ENCODE measurements at regions of chr4 and their contacts with region 1.

Region 1: DNA sequence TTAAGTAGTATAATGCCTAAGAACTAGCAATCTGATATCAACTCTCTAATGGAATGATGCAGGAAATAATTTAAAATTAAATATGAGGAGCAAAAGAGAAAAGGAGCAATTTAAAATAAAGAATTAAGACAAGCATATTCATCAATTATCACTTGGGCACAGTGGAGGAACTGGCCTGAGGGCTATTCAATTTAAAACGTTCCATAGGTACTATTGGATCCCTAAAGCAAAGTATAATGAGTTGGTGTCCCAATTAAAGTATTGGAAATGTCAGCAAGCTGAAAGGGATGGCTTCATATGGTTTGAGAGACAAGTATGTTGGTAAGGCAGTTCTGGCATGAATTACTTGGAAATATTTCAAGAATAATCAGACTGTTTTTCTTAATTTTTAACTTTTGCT is 2064.1 kb upstream of the TENM3 start:
- DNase-seq: no peak
- H3K4me3 Mint-ChIP-seq: no peak overlapping the region
- H3K27ac Mint-ChIP-seq: no peak overlapping the region
- H3K4me1 Mint-ChIP-seq: no peaks in the 10 kb centered on the region
- H3K27me3 Mint-ChIP-seq: peaks cover 13% of the 10 kb centered on the region
- CTCF ChIP-seq: no peak

Region 2: DNA sequence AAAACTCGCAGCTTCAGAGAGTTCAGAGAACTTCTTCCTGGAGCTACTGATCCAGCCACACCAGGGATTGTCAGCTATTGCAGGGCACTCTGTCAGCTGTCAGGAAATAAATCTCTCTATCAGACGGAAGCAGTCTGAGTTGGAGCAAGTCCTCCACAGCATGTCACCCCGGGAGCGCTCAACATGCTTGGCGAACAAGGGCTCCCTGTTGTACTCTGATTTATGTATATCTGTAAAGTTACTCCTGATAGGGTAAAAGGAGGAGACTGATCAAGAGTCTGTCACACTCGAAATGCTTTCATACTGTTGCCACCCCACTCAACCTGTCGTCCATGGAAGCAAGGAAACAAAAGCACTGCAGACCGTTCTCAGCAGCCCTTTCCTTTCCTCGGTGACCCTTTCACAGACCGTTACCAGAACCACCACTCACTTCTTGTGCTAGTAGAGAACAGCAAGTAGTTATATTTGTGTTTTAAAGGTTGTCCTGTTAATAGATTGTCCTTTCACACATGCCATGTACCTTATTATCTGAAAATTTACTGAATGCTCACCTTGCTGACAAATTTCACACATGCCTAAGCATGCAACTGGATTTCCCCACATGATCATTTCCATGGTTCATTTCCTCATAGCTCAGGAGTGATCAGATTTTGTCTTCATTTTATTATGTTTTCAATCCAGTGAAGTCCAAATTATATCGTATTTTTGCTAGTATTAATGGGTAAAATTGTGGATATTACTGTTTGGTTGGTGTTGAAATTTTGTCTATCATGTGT is 44.9 kb before region 1 on chr4:
- CTCF ChIA-PET with region 1: no interaction called
- POLR2A ChIA-PET with region 1: no interaction called
- intact Hi-C with region 1: loop called (anchors 5 kb)
- DNase-seq: no peak
- H3K4me3 Mint-ChIP-seq: no peak overlapping the region
- H3K27ac Mint-ChIP-seq: no peak overlapping the region
- H3K4me1 Mint-ChIP-seq: peaks cover 6% of the 10 kb centered on the region
- H3K27me3 Mint-ChIP-seq: no peaks in the 10 kb centered on the region
- CTCF ChIP-seq: no peak

Region 3: GRCh38 chr4:180190382-180190781 is 11.2 kb after region 1 on chr4:
- CTCF ChIA-PET with region 1: no interaction called
- POLR2A ChIA-PET with region 1: no interaction called
- intact Hi-C with region 1: no loop called
- DNase-seq: peak; percentile 11
- H3K4me3 Mint-ChIP-seq: no peak overlapping the region
- H3K27ac Mint-ChIP-seq: no peak overlapping the region
- H3K4me1 Mint-ChIP-seq: no peaks in the 10 kb centered on the region
- H3K27me3 Mint-ChIP-seq: no peaks in the 10 kb centered on the region
- CTCF ChIP-seq: no peak